A673 (cell line): ENCODE measurements at regions of chr6 and their contacts with region 1.

Region 1: GRCh38 chr6:31087494-31088089 is 24.8 kb downstream of the C6orf15 start:
- DNase-seq: peak; percentile 93
- H3K4me3 ChIP-seq: no peak overlapping the region
- H3K27ac ChIP-seq: no peak overlapping the region
- H3K4me1 ChIP-seq: peaks cover 19% of the 10 kb centered on the region
- H3K27me3 ChIP-seq: no peaks in the 10 kb centered on the region
- CTCF ChIP-seq: peak; percentile 84

Region 2: DNA sequence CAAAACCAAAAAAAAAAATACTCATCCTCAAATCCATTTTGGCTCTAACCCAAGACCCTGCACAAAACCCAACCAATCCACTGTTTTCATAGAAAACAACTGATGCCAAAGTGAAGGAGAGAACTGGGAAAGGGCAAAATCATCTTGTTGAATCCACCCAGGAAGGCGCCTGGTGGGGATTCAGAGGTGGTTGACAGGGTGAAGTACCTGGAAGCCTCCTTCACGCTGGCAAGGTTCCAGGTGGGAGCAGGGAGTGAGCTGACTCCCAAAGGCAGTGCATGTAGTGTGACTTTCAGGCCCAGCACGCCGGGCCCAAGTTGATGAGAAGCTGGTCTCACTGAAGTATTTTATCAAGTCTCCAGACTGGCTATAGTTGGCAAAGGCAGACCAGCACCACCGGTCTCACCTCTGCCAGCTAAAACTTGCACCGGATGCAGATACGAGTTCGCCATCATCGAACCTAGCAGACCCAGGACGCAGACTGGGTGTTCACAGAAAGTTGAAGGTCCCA is 487.1 kb before region 1 on chr6:
- CTCF ChIA-PET with region 1: interaction called, 13 read pairs
- POLR2A ChIA-PET with region 1: no interaction called
- intact Hi-C with region 1: no loop called
- DNase-seq: no peak
- H3K4me3 ChIP-seq: no peak overlapping the region
- H3K27ac ChIP-seq: no peak overlapping the region
- H3K4me1 ChIP-seq: no peaks in the 10 kb centered on the region
- H3K27me3 ChIP-seq: no peaks in the 10 kb centered on the region
- CTCF ChIP-seq: no peak

Region 3: DNA sequence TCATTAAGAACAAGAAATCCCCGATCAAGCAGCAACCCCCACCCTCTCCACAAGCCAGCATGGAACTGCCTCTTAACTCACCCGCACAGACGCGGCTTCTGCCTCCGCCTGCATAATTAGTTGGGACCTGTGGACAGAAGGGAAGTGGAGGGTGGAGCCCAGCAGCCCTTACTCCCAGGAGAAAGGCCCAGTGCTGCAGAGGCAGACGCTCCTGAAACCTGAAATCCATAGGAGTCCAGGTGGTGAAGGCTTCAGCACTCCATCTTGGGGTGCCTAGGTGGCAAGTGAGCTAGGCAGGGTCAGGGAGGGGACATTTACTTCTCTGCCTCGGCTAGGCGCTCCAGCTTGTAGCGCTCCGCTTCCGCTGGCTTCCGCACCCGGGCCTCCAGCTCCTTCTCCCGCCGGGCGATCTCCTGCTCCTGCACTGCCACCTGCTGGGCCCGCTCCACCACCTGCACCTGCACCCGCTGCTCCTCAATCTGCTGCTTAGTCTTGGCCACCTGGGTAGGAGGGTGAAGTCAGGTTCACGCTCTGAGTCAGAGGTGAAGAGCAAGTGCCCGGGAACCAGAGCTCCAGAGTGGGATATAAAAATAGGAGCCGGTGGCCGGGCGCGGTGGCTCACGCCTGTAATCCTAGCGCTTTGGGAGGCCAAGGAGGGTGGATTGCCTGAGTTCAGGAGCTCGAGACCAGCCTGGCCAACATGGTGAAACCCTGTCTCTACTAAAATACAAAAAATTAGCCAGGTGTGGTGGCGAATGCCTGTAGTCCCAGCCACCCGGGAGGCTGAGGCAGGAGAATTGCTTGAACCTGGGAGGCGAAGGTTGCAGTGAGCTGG is 356.8 kb before region 1 on chr6:
- CTCF ChIA-PET with region 1: interaction called, 10 read pairs
- POLR2A ChIA-PET with region 1: no interaction called
- intact Hi-C with region 1: loop called (anchors 5 kb)
- DNase-seq: peak; percentile 69
- H3K4me3 ChIP-seq: no peak overlapping the region
- H3K27ac ChIP-seq: no peak overlapping the region
- H3K4me1 ChIP-seq: peaks cover 5% of the 10 kb centered on the region
- H3K27me3 ChIP-seq: no peaks in the 10 kb centered on the region
- CTCF ChIP-seq: peak; percentile 62

Region 4: GRCh38 chr6:30752157-30752927 is 335.2 kb before region 1 on chr6:
- CTCF ChIA-PET with region 1: no interaction called
- POLR2A ChIA-PET with region 1: no interaction called
- intact Hi-C with region 1: no loop called
- DNase-seq: peak; percentile 84
- H3K4me3 ChIP-seq: no peak overlapping the region
- H3K27ac ChIP-seq: peak overlapping the region; percentile 46
- H3K4me1 ChIP-seq: peaks cover 19% of the 10 kb centered on the region
- H3K27me3 ChIP-seq: no peaks in the 10 kb centered on the region
- CTCF ChIP-seq: no peak

Region 5: DNA sequence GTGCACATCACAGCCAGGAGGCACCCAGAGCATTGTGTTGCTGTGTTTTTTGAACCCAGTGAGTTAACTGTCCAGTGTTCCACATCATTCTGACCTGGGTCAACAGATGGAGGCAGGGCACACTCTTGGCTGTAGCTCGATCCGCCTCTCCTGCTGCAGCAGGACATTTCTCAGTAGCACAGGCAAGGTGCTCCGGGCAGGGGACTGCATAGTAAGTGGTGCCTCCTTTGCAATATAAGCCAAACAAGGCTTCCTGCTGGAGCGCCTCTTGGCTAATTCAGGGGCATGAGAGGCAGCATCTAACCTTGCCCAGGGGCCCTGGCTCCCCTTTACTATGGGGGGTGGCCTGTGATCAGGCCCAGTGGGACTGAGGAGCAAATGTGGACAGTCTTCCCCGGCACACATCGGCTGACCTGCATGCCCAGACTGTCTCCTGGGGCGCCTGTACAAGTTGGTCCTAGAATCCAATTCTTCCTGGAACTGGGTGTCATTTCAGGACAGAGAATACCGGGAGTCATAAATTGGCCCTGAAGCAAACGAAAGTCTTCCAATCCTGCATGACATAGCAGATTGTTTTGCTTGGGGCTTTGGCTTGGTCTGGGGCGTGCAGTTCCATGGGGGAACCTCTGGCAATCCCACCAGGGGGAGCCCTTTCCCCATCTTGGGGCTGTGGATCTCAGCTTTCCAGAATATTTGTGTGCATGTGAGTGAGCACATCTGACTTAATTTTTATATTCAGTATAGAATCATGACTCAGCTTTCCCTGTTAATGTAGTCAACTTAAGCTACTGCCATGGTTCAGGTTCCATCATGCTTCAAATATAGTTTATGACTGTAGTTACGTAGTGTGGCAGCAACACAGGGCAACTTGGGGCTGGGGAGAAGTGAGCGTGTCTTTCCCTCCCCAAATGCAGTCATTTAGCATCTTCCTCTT is 259.3 kb before region 1 on chr6:
- CTCF ChIA-PET with region 1: interaction called, 24 read pairs
- POLR2A ChIA-PET with region 1: no interaction called
- intact Hi-C with region 1: loop called (anchors 2 kb)
- DNase-seq: peak; percentile 90
- H3K4me3 ChIP-seq: no peak overlapping the region
- H3K27ac ChIP-seq: peak overlapping the region; percentile 40
- H3K4me1 ChIP-seq: peaks cover 5% of the 10 kb centered on the region
- H3K27me3 ChIP-seq: no peaks in the 10 kb centered on the region
- CTCF ChIP-seq: peak; percentile 96

Region 6: GRCh38 chr6:31049518-31049917 is 38.1 kb before region 1 on chr6:
- CTCF ChIA-PET with region 1: no interaction called
- POLR2A ChIA-PET with region 1: no interaction called
- intact Hi-C with region 1: no loop called
- DNase-seq: no peak
- H3K4me3 ChIP-seq: no peak overlapping the region
- H3K27ac ChIP-seq: no peak overlapping the region
- H3K4me1 ChIP-seq: peaks cover 10% of the 10 kb centered on the region
- H3K27me3 ChIP-seq: no peaks in the 10 kb centered on the region
- CTCF ChIP-seq: no peak

Region 7: GRCh38 chr6:31068669-31069340 is 18.8 kb before region 1 on chr6:
- CTCF ChIA-PET with region 1: interaction called, 15 read pairs
- POLR2A ChIA-PET with region 1: no interaction called
- intact Hi-C with region 1: no loop called
- DNase-seq: peak; percentile 88
- H3K4me3 ChIP-seq: no peak overlapping the region
- H3K27ac ChIP-seq: no peak overlapping the region
- H3K4me1 ChIP-seq: peaks cover 9% of the 10 kb centered on the region
- H3K27me3 ChIP-seq: no peaks in the 10 kb centered on the region
- CTCF ChIP-seq: peak; percentile 93

Region 8: DNA sequence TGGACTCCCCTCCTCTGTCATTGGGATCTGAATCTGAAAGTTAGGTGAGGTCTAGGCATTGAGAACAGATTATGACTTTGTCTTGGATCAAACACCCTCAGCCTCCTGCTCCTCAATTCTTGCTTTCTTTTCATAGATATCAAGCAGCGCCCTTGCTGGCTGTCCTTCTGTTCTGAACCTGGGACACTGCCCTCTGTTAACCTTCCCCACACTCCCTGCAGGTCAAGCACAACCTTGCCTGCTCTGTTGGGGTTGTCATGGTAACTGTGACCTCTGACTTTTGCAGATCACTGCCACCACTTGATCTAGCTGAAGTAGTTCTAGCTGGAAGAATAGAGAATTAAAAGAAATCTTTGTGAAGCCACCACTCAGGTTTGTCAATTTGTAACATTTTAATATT is 299.4 kb after region 1 on chr6:
- CTCF ChIA-PET with region 1: no interaction called
- POLR2A ChIA-PET with region 1: no interaction called
- intact Hi-C with region 1: no loop called
- DNase-seq: no peak
- H3K4me3 ChIP-seq: no peak overlapping the region
- H3K27ac ChIP-seq: no peak overlapping the region
- H3K4me1 ChIP-seq: no peaks in the 10 kb centered on the region
- H3K27me3 ChIP-seq: no peaks in the 10 kb centered on the region
- CTCF ChIP-seq: no peak

Region 9: DNA sequence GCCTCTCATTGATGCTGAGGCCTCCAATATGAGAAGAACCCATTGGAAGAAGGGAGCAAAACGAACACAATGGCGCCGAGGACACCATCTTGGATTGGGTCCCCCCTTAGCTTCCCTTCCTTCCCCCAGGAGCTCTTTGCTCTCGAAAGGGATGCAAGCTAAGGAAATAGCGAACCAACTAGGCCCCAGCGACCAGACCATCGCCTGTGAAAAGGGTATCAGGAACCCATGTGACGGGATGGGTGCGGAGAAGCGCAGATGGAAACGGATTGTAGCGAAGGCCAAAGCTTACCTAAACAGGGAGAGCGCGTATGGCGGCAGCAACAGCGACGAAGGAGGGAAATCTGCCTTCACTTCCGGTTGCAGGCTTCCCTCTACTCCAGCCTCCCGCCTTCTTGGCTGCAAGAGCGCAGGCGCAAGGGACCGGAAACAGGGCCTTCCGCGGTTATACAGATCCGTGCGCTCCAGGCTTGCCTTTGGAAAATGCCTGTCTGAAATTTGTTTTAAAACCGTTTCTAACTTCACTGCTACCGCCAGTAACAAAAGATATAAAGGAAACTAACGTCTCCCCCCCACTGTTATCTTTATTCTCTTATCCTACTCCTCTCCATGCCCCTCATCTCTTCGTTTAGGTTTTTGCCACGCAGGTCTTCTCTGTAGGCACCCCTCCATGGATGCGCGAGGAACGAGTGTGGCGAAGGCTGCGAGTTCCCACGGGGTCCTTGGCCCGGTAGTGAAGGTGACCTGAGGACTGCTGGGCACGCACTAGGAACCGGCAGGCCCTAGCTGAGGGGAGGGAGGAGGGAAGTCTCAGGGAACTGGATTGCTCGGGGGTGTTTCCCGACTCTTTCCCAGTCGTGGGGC is 454.3 kb after region 1 on chr6 and contains the start of gene DDX39B:
- CTCF ChIA-PET with region 1: no interaction called
- POLR2A ChIA-PET with region 1: no interaction called
- intact Hi-C with region 1: no loop called
- DNase-seq: peak; percentile 99
- H3K4me3 ChIP-seq: peak within 1 kb of the TSS; percentile 87
- H3K27ac ChIP-seq: peak within 1 kb of the TSS; percentile 99
- H3K4me1 ChIP-seq: peaks cover 16% of the 10 kb centered on the region
- H3K27me3 ChIP-seq: no peaks in the 10 kb centered on the region
- CTCF ChIP-seq: no peak
- total RNA-seq, gene DDX39B: 558 and 594 TPM in 2 replicates